ENCODE measurements at regions of chr11 and their contacts with region 1.

Region 1: GRCh38 chr11:41461057-41461681 is 1.7 kb upstream of the LRRC4C start:
- DNase-seq: no peak
- CTCF ChIP-seq: peak; percentile 62

Region 2: GRCh38 chr11:41413843-41414242 is 47.3 kb before region 1 on chr11:
- CTCF ChIA-PET with region 1: no interaction called
- POLR2A ChIA-PET with region 1: no interaction called
- DNase-seq: peak; percentile 19
- CTCF ChIP-seq: no peak

Region 3: GRCh38 chr11:41449483-41450050 is 11.6 kb before region 1 on chr11:
- CTCF ChIA-PET with region 1: interaction called, 10 read pairs
- POLR2A ChIA-PET with region 1: no interaction called
- DNase-seq: no peak
- CTCF ChIP-seq: no peak

Region 4: DNA sequence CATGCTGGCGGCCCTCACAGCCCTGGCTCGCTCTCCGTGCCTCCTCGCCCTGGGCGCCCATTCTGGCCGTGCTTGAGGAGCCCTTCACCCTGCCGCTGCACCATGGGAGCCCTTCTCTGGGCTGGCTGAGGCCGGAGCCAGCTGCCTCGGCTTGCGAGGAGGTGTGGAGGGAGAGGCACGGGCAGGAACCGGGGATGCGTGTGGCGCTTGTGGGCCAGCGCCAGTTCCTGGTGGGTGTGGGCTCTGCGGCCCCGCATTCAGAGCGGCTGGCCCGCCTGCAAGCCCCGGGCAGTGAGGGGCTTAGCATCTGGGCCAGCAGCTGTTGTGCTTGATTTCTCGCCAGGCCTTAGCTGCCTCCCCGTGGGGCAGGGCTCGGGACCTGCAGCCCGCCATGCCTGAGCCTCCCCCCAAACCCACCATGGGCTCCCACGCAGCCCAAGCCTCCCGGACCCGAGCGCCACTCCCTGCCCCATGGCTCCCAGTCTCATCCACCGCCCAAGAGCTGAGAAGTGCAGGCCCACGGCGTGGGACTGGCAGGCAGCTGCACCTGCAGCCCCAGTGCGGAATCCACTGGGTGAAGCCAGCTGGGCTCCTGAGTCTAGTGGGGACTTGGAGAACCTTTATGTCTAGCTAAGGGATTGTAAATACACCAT is 161.7 kb after region 1 on chr11:
- CTCF ChIA-PET with region 1: no interaction called
- POLR2A ChIA-PET with region 1: no interaction called
- DNase-seq: no peak
- CTCF ChIP-seq: no peak

Measured in GM10248 (cell line).